ENCODE measurements at regions of chr7 and their contacts with region 1.

Region 1: GRCh38 chr7:74068393-74069085 is 15.1 kb upstream of the LIMK1 start:
- DNase-seq: no peak
- H3K4me3 ChIP-seq: no peak overlapping the region
- H3K27ac ChIP-seq: no peak overlapping the region
- H3K4me1 ChIP-seq: no peaks in the 10 kb centered on the region
- H3K27me3 ChIP-seq: no peaks in the 10 kb centered on the region

Region 2: GRCh38 chr7:74183613-74184450 is 115.3 kb after region 1 on chr7:
- CTCF ChIA-PET with region 1: interaction called, 15 read pairs
- POLR2A ChIA-PET with region 1: interaction called, 9 read pairs
- DNase-seq: peak; percentile 37 to 45 (median 39)
- H3K4me3 ChIP-seq: no peak overlapping the region
- H3K27ac ChIP-seq: no peak overlapping the region
- H3K4me1 ChIP-seq: peaks cover 20 to 44% (median 34%) of the 10 kb centered on the region in 4 experiments
- H3K27me3 ChIP-seq: no peaks in the 10 kb centered on the region

Region 3: DNA sequence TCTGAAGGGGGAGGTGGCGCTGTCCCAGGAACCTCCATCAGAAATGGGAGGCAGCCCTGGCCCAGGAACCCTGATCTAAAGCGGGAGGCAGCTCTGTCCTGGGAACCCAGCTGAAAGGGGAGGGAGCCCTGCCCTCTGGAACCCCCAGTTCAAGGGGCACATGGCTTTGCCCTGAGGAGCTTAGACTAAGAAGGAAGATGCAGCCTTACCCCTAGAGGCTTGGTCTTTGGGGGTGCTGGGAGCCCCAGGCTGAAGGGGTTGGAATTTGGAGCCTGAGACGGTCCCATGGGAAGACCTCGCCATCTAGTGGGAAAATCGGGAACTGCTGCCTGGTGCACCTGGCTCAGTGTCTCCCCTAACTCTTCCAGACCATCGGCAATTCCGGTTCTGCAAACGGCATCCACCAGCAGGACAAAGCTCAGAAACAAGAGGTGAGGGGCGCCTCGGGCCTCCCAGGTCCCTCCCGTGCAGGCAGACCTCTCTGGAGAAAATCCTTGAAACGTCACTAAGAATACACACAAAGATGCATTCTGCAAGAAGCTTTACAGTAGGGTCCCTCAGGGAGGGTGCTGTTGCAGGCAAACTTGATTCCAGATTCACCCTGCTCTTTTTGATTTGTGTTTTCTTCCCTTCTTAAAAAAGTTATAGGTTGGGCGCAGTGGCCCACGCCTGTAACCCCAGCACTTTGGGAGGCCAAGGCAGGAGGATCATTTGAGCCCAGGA is 332.8 kb after region 1 on chr7:
- CTCF ChIA-PET with region 1: interaction called, 25 read pairs
- POLR2A ChIA-PET with region 1: no interaction called
- DNase-seq: peak; percentile 55 to 78 (median 67)
- H3K4me3 ChIP-seq: no peak overlapping the region
- H3K27ac ChIP-seq: no peak overlapping the region
- H3K4me1 ChIP-seq: no peaks in the 10 kb centered on the region
- H3K27me3 ChIP-seq: no peaks in the 10 kb centered on the region

Measured in common myeloid progenitor, CD34-positive (primary cell).